PC-3 (cell line): ENCODE measurements at regions of chr20 and their contacts with region 1.

Region 1: GRCh38 chr20:2109425-2110210 is 8.0 kb downstream of the STK35 start:
- DNase-seq: no peak
- ATAC-seq: no peak; the same call in 1 of the 2 replicates
- H3K4me3 ChIP-seq: no peak overlapping the region
- H3K27ac ChIP-seq: no peak overlapping the region
- H3K4me1 ChIP-seq: peaks cover 44% of the 10 kb centered on the region
- H3K27me3 ChIP-seq: no peaks in the 10 kb centered on the region
- CTCF ChIP-seq: no peak

Region 2: DNA sequence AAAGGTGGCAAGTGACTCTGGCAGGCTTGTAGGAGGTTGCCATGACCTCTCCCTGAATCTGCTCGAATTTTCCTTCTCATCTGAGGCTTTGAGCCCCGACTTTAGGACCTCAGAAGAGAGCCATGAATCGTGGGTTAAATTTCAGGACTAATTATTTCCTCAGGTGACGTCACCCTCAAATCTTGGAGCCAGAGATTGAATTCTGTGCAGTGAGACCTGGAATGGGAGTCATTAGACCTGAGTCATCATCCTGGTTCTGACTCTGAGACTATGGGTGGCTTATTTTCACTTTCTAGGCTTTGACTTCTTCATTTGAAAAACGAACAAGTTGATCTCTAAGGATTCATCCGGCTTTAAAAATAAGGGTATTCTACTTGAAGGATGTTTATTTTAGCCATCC is 67.2 kb before region 1 on chr20:
- CTCF ChIA-PET with region 1: no interaction called
- POLR2A ChIA-PET with region 1: no interaction called
- intact Hi-C with region 1: no loop called
- DNase-seq: peak; percentile 59
- ATAC-seq: peak; percentile 56
- H3K4me3 ChIP-seq: no peak overlapping the region
- H3K27ac ChIP-seq: no peak overlapping the region
- H3K4me1 ChIP-seq: no peaks in the 10 kb centered on the region
- H3K27me3 ChIP-seq: peaks cover 88% of the 10 kb centered on the region
- CTCF ChIP-seq: no peak

Region 3: GRCh38 chr20:2131366-2131765 is 21.7 kb after region 1 on chr20:
- CTCF ChIA-PET with region 1: interaction called, 3 read pairs
- POLR2A ChIA-PET with region 1: interaction called, 4 read pairs
- intact Hi-C with region 1: loop called (anchors 2 kb)
- DNase-seq: peak; percentile 81
- ATAC-seq: peak; percentile 86
- H3K4me3 ChIP-seq: peak overlapping the region; percentile 35; the same call in 1 of the 2 replicates
- H3K27ac ChIP-seq: peak overlapping the region; percentile 64
- H3K4me1 ChIP-seq: peaks cover 40% of the 10 kb centered on the region
- H3K27me3 ChIP-seq: no peaks in the 10 kb centered on the region
- CTCF ChIP-seq: no peak

Region 4: DNA sequence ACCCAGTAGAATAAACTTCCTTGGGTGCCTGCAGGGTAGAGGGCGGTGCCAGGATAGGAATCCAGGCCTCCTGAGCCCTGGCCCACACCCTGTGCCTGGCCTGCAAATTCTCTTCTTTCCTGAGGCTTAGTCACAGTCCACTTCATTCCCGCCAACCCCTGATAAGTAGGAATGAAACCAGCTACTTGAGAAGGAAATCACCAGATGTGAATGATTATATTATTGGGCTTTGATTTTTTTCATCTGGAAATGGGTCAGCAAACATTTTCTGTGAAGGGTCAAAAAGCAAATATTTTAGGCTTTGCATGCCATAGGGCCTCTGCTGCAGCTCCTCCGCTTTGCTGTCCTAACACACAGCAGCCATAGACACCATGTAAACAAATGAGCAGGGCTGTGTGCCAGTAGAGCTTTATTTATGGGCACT is 42.3 kb after region 1 on chr20:
- CTCF ChIA-PET with region 1: no interaction called
- POLR2A ChIA-PET with region 1: no interaction called
- intact Hi-C with region 1: loop called (anchors 5 kb)
- DNase-seq: peak; percentile 76
- ATAC-seq: peak; percentile 99
- H3K4me3 ChIP-seq: no peak overlapping the region
- H3K27ac ChIP-seq: no peak overlapping the region
- H3K4me1 ChIP-seq: peaks cover 16% of the 10 kb centered on the region
- H3K27me3 ChIP-seq: no peaks in the 10 kb centered on the region
- CTCF ChIP-seq: no peak

Region 5: GRCh38 chr20:2206957-2207769 is 97.5 kb after region 1 on chr20:
- CTCF ChIA-PET with region 1: no interaction called
- POLR2A ChIA-PET with region 1: no interaction called
- intact Hi-C with region 1: no loop called
- DNase-seq: peak; percentile 63
- ATAC-seq: peak; percentile 88
- H3K4me3 ChIP-seq: peak overlapping the region; percentile 49
- H3K27ac ChIP-seq: no peak overlapping the region
- H3K4me1 ChIP-seq: no peaks in the 10 kb centered on the region
- H3K27me3 ChIP-seq: peaks cover 56% of the 10 kb centered on the region
- CTCF ChIP-seq: peak; percentile 86